ENCODE measurements at regions of chr1 and their contacts with region 1.

Region 1: GRCh38 chr1:30718636-30719405 is 4.6 kb downstream of the MATN1 start:
- H3K4me3 ChIP-seq: peak overlapping the region; percentile 57
- H3K27ac ChIP-seq: peak overlapping the region; percentile 37; the same call in 1 of the 2 replicates
- H3K4me1 ChIP-seq: no peaks in the 10 kb centered on the region
- CTCF ChIP-seq: peak; percentile 96

Region 2: DNA sequence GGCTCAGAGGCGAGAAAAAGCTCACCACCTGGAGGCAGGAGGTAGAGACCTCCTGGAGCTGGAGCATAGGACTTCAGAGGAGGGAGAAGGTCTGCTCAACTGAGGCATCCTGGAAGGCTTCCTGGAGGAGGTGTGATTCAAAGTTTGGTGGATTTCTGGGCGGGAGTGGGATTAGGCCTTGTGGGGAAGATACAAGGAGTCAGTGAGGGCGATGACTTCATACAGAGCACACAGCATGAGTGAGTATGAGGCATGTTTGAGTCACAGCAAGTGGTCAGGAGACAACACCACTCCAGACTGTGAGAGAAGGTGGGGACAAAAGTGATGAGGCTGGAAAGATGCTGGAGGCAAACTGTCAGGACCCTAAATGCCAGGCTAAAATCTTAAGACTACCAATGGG is 73.0 kb before region 1 on chr1:
- CTCF ChIA-PET with region 1: no interaction called
- POLR2A ChIA-PET with region 1: no interaction called
- H3K4me3 ChIP-seq: no peak overlapping the region
- H3K27ac ChIP-seq: no peak overlapping the region
- H3K4me1 ChIP-seq: no peaks in the 10 kb centered on the region
- CTCF ChIP-seq: no peak

Region 3: DNA sequence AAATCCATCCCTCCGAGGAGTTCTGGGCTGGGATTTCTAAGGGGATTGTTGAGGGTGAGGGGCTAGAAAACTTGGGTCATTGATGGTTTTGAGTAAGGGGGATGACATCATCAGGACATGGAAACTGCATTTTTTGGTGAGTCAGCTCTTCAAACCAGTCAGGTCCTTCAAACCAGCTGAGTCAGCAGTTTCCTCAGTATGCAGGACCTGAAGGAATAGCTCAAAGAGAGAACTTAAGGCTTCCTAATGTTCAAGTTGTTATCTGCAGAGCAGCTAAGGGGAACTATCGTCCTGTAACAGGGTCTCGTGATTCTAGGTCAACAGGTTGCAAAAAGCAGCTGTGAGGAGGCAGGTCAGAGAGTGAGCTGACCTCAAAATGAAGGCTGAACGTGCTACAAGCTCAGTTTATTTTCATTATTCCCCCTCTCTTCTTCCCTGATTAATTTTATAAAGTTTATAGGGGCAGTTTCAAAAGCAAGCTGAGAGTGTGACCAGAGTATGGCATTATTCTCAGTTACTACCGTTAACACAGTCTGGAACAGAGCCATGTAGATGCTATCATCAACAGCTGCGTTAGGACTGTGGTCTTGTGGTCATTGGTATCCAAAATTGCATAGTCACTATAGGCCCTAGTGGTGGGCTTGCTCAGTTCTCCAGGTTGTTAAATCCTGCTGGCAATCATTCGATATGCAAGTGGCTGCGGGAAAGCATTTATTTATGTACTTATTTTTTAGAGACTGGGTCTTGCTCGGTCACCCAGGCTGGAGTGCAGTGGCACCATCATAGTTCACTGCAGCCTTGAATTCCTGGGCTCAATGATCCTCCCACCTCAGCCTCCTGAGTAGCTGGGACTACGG is 200.4 kb after region 1 on chr1:
- CTCF ChIA-PET with region 1: interaction called, 11 read pairs
- POLR2A ChIA-PET with region 1: interaction called, 3 read pairs
- H3K4me3 ChIP-seq: no peak overlapping the region
- H3K27ac ChIP-seq: no peak overlapping the region
- H3K4me1 ChIP-seq: peaks cover 3% of the 10 kb centered on the region; the same call in 1 of the 2 replicates
- CTCF ChIP-seq: no peak

Region 4: DNA sequence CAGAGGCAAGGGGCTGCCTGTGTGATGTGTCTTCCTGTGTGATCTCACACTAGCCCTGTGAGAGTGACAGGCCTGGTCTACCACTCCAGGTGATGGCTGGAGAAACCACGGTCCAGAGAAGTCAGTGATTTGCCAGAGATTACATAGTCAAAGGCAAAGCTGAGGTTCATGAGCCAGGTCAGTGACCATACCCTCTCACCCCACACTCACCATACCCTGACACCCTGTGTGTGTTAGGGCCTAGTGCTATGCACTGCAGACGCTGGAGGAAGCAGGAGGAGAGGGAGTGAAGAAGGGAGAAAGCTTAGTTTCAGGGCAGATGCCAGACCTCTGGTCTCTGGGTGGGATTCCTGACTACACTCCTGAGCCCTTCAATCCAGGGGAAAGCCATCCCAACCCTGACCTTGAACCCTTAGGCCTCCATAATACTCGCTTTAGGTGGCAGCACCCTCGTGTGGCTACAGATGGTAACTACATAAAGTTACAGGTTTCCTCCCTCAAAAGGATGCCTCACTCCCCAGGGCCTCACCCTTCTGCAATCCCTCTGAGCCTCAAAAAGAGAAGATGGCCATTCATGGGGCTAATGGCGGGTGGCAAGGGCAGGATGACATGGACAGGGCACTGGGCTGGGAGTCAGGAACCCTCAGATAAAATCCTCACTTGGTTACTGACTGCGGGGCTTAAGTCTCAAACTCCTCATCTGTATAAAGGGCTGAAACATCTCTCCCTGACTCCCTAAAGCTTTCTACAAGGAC is 210.5 kb after region 1 on chr1:
- CTCF ChIA-PET with region 1: interaction called, 12 read pairs
- POLR2A ChIA-PET with region 1: no interaction called
- H3K4me3 ChIP-seq: no peak overlapping the region
- H3K27ac ChIP-seq: no peak overlapping the region
- H3K4me1 ChIP-seq: no peaks in the 10 kb centered on the region
- CTCF ChIP-seq: peak; percentile 79; the same call in 1 of the 2 replicates